ENCODE measurements at regions of chr5 and their contacts with region 1.

Region 1: GRCh38 chr5:126776497-126777256 is at the start of gene LMNB1:
- DNase-seq: peak; percentile 83
- ATAC-seq: peak; percentile 80
- H3K4me3 ChIP-seq: peak within 1 kb of the TSS; percentile 96
- H3K27ac ChIP-seq: peak within 1 kb of the TSS; percentile 96
- H3K4me1 ChIP-seq: no peaks in the 10 kb centered on the region
- H3K27me3 ChIP-seq: no peaks in the 10 kb centered on the region
- CTCF ChIP-seq: no peak
- EP300 ChIP-seq: 0 out of 4 replicates have a peak, but pooled peaks have one; percentile 16 to 55
- POLR2A ChIP-seq: peak; percentile 70
- RAD21 ChIP-seq: 0 out of 2 replicates have a peak, but pooled peaks have one; percentile 18
- polyA plus RNA-seq, gene LMNB1: 7.0 to 7.1 TPM

Region 2: GRCh38 chr5:126449751-126450271 is 326.9 kb before region 1 on chr5:
- CTCF ChIA-PET with region 1: no interaction called
- POLR2A ChIA-PET with region 1: no interaction called
- RAD21 ChIA-PET with region 1: no interaction called
- SMC1A ChIA-PET with region 1: no interaction called
- in situ Hi-C with region 1: no loop called
- intact Hi-C with region 1: loop called (anchors 10 kb)
- DNase-seq: peak; percentile 79
- ATAC-seq: peak; percentile 86
- H3K4me3 ChIP-seq: peak overlapping the region; percentile 51; the same call in 1 of the 2 replicates
- H3K27ac ChIP-seq: peak overlapping the region; percentile 94
- H3K4me1 ChIP-seq: peaks cover 36% of the 10 kb centered on the region
- H3K27me3 ChIP-seq: no peaks in the 10 kb centered on the region
- CTCF ChIP-seq: no peak
- EP300 ChIP-seq: peak; percentile 38; a peak in 2 of 4 replicates
- POLR2A ChIP-seq: peak; percentile 64
- RAD21 ChIP-seq: peak; percentile 14; the same call in 1 of the 2 replicates

Region 3: DNA sequence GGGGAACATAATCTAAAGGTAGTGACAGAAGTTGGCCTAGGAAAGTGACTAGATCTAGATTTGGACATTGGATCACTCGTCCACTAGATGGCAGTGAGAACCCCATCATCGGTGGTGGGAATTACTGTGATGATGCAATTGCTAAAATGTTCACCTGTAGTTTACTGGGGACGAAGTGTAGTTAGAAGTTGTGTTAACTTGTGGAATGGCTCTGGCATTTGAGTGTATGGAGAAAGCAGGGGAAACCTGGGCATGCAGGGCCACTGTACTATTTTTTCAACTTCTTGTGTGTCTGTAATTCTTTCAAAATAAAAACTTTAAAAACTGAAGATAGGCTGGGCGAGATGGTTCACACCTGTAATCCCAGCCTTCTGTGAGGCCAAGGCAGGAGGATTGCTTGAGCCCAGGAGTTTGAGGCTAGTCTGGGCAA is 100.5 kb before region 1 on chr5:
- CTCF ChIA-PET with region 1: interaction called, 445 read pairs
- POLR2A ChIA-PET with region 1: interaction called, 131 read pairs
- RAD21 ChIA-PET with region 1: interaction called, 306 read pairs
- SMC1A ChIA-PET with region 1: interaction called, 441 read pairs
- in situ Hi-C with region 1: loop called (anchors 5 kb)
- intact Hi-C with region 1: loop called (anchors 1 kb)
- DNase-seq: peak; percentile 68
- ATAC-seq: peak; percentile 71
- H3K4me3 ChIP-seq: no peak overlapping the region
- H3K27ac ChIP-seq: no peak overlapping the region
- H3K4me1 ChIP-seq: peaks cover 2% of the 10 kb centered on the region; the same call in 1 of the 2 replicates
- H3K27me3 ChIP-seq: no peaks in the 10 kb centered on the region
- CTCF ChIP-seq: peak; percentile 75 to 94 (median 82)
- EP300 ChIP-seq: no peak
- POLR2A ChIP-seq: no peak
- RAD21 ChIP-seq: peak; percentile 98

Region 4: GRCh38 chr5:126723643-126724042 is 53.0 kb before region 1 on chr5:
- CTCF ChIA-PET with region 1: interaction called, 4 read pairs
- POLR2A ChIA-PET with region 1: no interaction called
- RAD21 ChIA-PET with region 1: no interaction called
- SMC1A ChIA-PET with region 1: interaction called, 13 read pairs
- in situ Hi-C with region 1: no loop called
- intact Hi-C with region 1: no loop called
- DNase-seq: no peak
- ATAC-seq: peak; percentile 89
- H3K4me3 ChIP-seq: no peak overlapping the region
- H3K27ac ChIP-seq: no peak overlapping the region
- H3K4me1 ChIP-seq: no peaks in the 10 kb centered on the region
- H3K27me3 ChIP-seq: no peaks in the 10 kb centered on the region
- CTCF ChIP-seq: no peak
- EP300 ChIP-seq: no peak
- POLR2A ChIP-seq: no peak
- RAD21 ChIP-seq: no peak

Region 5: DNA sequence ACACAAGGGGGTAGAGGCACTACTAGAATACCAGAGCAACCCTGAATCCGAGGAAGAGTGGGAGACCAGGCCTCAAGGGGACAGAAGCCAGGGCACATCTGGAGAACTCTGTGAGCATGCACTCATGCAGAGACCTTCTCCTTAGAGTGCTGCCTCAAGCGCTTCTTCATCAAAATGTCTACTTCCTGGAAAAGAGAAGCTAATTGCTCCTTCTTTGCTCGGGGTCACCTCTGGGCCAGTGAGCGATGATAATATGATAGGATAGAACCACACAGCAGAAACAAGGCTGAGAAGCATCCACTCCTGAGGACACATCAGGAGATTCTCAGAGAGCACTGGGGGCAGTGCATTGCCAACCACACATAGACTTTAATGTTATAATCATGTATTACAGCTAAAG is 23.4 kb before region 1 on chr5:
- CTCF ChIA-PET with region 1: interaction called, 136 read pairs
- POLR2A ChIA-PET with region 1: interaction called, 140 read pairs
- RAD21 ChIA-PET with region 1: interaction called, 31 read pairs
- SMC1A ChIA-PET with region 1: interaction called, 119 read pairs
- in situ Hi-C with region 1: no loop called
- intact Hi-C with region 1: loop called (anchors 1 kb)
- DNase-seq: no peak
- ATAC-seq: no peak
- H3K4me3 ChIP-seq: no peak overlapping the region
- H3K27ac ChIP-seq: no peak overlapping the region
- H3K4me1 ChIP-seq: peaks cover 14% of the 10 kb centered on the region
- H3K27me3 ChIP-seq: no peaks in the 10 kb centered on the region
- CTCF ChIP-seq: no peak
- EP300 ChIP-seq: no peak
- POLR2A ChIP-seq: no peak
- RAD21 ChIP-seq: no peak

Region 6: DNA sequence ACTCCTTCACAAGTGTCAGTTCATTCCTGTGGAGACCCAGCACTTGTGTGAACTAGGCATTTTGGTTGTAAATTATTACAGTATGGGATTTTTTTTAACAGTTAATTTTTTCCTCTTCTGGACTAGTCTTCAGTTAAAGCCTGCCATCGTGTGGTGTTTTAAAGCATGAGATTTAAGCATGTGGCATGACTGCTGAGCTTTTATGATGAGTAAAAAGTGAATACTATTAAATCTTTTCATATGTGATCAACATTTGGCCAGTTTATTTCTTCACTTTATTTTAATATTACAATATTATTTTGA is 25.3 kb after region 1 on chr5:
- CTCF ChIA-PET with region 1: interaction called, 29 read pairs
- POLR2A ChIA-PET with region 1: interaction called, 31 read pairs
- RAD21 ChIA-PET with region 1: interaction called, 67 read pairs
- SMC1A ChIA-PET with region 1: interaction called, 20 read pairs
- in situ Hi-C with region 1: no loop called
- intact Hi-C with region 1: loop called (anchors 1 kb)
- DNase-seq: no peak
- ATAC-seq: peak; percentile 68
- H3K4me3 ChIP-seq: no peak overlapping the region
- H3K27ac ChIP-seq: no peak overlapping the region
- H3K4me1 ChIP-seq: peaks cover 7% of the 10 kb centered on the region; the same call in 1 of the 2 replicates
- H3K27me3 ChIP-seq: no peaks in the 10 kb centered on the region
- CTCF ChIP-seq: peak; percentile 39 to 66 (median 49); a peak in 4 of 6 replicates
- EP300 ChIP-seq: no peak
- POLR2A ChIP-seq: no peak
- RAD21 ChIP-seq: peak; percentile 73

Region 7: DNA sequence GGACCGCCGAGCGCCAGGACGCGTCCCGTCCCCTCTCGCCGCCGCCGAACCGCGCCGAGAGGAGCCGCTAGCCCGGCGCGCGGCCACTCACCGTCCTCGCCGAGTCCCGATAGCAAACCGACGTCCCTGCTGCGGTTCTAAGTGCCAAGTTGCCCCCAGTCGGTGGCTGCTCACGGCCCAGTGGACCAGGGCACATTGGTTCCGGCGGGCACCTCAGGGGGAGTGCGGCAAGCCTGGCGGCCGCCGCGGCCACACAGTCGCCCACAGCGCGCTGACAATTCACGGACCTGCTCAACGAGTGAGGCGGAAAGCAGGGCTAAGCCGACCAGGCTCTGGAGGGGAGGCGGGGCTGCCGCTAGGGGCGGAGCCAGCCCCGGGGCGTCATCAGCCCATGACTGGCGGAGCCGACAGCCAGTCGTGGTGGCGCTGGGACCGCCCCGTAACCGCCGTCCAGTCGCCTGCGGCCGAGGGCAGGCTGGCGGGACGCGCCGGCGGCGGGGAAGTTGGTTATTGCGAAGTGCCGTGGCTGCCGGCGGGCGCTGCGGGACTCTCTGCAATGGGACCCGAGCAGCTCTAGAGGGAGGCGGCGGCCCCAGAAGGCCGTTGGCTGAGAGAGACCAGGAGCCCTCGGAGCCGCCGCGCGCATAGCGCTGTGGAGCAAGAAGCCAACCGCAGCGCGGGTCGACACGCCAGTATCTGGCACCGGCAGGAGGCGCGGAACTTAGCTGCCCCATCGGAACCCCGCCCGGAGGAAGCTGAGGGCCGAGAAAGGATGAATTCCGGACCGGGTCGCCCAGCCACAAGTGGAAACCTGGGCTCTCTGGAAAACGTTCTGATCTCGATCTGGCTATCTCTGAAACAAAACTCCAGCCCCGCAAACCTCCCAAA is 253.8 kb after region 1 on chr5 and contains the start of gene MARCHF3:
- CTCF ChIA-PET with region 1: no interaction called
- POLR2A ChIA-PET with region 1: interaction called, 13 read pairs
- RAD21 ChIA-PET with region 1: interaction called, 8 read pairs
- SMC1A ChIA-PET with region 1: interaction called, 4 read pairs
- in situ Hi-C with region 1: no loop called
- intact Hi-C with region 1: no loop called
- DNase-seq: peak; percentile 87
- ATAC-seq: peak; percentile 92
- H3K4me3 ChIP-seq: peak within 1 kb of the TSS; percentile 89
- H3K27ac ChIP-seq: peak within 1 kb of the TSS; percentile 46; the same call in 1 of the 2 replicates
- H3K4me1 ChIP-seq: peaks cover 6% of the 10 kb centered on the region
- H3K27me3 ChIP-seq: no peaks in the 10 kb centered on the region
- CTCF ChIP-seq: peak in 2 of 3 experiments; percentile 8 to 18; a peak in 2 of 6 replicates
- EP300 ChIP-seq: no peak
- POLR2A ChIP-seq: peak; percentile 95
- RAD21 ChIP-seq: no peak
- polyA plus RNA-seq, gene MARCHF3: 3.6 to 6.4 TPM

Region 8: GRCh38 chr5:127117657-127118056 is 341.0 kb after region 1 on chr5:
- CTCF ChIA-PET with region 1: no interaction called
- POLR2A ChIA-PET with region 1: no interaction called
- RAD21 ChIA-PET with region 1: no interaction called
- SMC1A ChIA-PET with region 1: no interaction called
- in situ Hi-C with region 1: no loop called
- intact Hi-C with region 1: no loop called
- DNase-seq: no peak
- ATAC-seq: no peak
- H3K4me3 ChIP-seq: no peak overlapping the region
- H3K27ac ChIP-seq: no peak overlapping the region
- H3K4me1 ChIP-seq: no peaks in the 10 kb centered on the region
- H3K27me3 ChIP-seq: no peaks in the 10 kb centered on the region; a peak in 2 of 4 replicates
- CTCF ChIP-seq: no peak
- EP300 ChIP-seq: no peak
- POLR2A ChIP-seq: no peak
- RAD21 ChIP-seq: no peak

Measured in GM12878 (cell line).